GM10248 (cell line): ENCODE measurements at regions of chr10 and their contacts with region 1.

Region 1: DNA sequence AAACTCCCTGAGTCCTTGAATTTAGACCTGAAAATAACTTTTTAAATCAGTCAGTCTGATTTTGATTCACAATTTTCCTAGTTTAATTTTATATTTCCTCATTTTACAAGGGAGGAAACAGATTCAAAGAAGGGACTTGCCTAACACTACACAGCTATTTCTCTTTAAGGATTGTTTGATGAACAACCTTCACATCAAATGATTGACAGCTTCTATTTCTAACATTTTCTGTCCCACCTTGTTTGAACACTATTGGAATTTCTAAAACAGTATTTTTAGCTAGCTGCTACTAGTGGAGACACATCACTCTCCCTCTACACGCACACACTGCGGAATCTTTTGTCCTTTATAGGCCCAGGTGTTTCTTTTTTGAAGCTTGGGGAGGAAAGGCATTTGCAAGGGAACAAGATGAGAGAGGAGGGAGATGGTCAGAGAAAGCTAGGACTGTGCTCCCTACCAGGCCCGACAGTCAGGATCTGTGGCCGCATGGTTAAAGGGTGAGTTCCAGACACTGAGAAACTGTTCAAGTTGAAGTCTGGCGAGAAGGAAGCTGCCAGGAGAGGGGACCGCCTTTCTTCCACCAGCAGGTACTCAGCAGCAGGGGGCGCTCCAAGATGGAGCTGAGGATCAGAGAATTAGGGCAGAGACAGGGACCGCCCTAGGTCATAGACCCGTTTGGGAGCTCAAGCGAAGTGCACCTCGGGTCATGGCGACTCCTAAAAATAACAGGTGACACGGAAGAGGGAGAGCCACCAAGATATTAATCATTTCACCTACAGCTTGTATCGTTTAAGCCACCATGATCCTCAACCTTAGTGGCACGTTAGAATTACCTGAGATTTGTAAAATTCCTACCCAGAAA is 49.7 kb downstream of the DNAJC12 start:
- DNase-seq: peak; percentile 77
- CTCF ChIP-seq: peak; percentile 84

Region 2: GRCh38 chr10:67764012-67764822 is 24.0 kb before region 1 on chr10:
- CTCF ChIA-PET with region 1: interaction called, 17 read pairs
- POLR2A ChIA-PET with region 1: interaction called, 6 read pairs
- DNase-seq: peak; percentile 80
- CTCF ChIP-seq: no peak

Region 3: GRCh38 chr10:67803588-67804394 is 15.5 kb after region 1 on chr10:
- CTCF ChIA-PET with region 1: interaction called, 18 read pairs
- POLR2A ChIA-PET with region 1: no interaction called
- DNase-seq: peak; percentile 52
- CTCF ChIP-seq: no peak

Region 4: GRCh38 chr10:67849331-67850011 is 61.2 kb after region 1 on chr10:
- CTCF ChIA-PET with region 1: interaction called, 15 read pairs
- POLR2A ChIA-PET with region 1: no interaction called
- DNase-seq: peak; percentile 92
- CTCF ChIP-seq: no peak

Region 5: GRCh38 chr10:68156373-68157185 is 368.3 kb after region 1 on chr10:
- CTCF ChIA-PET with region 1: interaction called, 89 read pairs
- POLR2A ChIA-PET with region 1: no interaction called
- DNase-seq: peak; percentile 34
- CTCF ChIP-seq: peak; percentile 76

Region 6: GRCh38 chr10:68301790-68302502 is 513.7 kb after region 1 on chr10:
- CTCF ChIA-PET with region 1: interaction called, 47 read pairs
- POLR2A ChIA-PET with region 1: no interaction called
- DNase-seq: peak; percentile 45
- CTCF ChIP-seq: peak; percentile 42